Tibial artery (tissue), 4 donors: ENCODE measurements at regions of chr9 and their contacts with region 1.

Region 1: DNA sequence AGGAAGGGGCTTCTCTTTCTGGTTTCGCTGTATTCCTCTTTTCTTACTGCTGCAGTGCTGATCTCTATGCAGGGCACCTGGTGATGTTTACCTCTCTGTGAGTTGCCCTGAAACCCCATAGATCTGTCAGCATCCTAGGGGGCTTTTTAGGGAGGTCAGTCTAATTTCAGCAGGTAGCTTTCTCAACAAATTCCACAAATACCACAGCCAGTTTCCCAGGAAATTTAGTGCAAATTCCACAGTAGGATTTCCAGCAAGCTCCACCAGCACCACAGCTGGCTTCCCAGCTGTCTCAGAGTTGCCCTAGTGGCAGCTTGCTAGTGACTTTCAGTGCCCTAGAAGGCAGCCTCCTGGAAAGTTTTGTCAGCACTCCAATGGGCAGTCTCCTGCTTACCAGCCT is 379.1 kb upstream of the SMC2 start:
- DNase-seq: no peak
- H3K4me3 ChIP-seq: no peak overlapping the region
- H3K27ac ChIP-seq: no peak overlapping the region
- H3K4me1 ChIP-seq: no peaks in the 10 kb centered on the region
- H3K27me3 ChIP-seq: no peaks in the 10 kb centered on the region
- CTCF ChIP-seq: no peak

Region 2: DNA sequence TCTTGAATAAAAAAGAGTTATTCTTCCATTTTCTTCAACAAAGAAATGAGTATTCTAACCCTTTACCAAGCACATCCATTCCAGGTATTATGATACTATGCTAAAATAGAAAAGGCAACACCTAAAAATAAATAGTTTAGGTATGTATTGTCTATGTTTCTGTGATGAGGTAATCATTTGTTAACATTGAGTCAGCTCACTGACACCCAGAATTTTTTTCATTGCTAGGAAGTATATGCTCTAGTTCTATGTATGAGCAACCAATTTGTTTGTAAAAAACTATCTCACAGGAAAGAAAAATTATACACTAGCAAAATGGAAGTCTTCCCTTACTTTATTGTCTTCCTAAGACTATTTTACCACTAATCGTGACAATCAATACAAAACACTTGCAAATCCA is 1361.0 kb before region 1 on chr9:
- intact Hi-C with region 1: loop called (anchors 5 kb)
- DNase-seq: no peak
- H3K4me3 ChIP-seq: no peak overlapping the region
- H3K27ac ChIP-seq: no peak overlapping the region
- H3K4me1 ChIP-seq: no peaks in the 10 kb centered on the region
- H3K27me3 ChIP-seq: no peaks in the 10 kb centered on the region
- CTCF ChIP-seq: no peak